ENCODE measurements at regions of chr6 and their contacts with region 1.

Region 1: GRCh38 chr6:99471638-99472037 is 43.6 kb downstream of the USP45 start:
- DNase-seq: no peak
- H3K4me3 ChIP-seq: no peak overlapping the region
- H3K27ac ChIP-seq: no peak overlapping the region
- H3K4me1 ChIP-seq: no peaks in the 10 kb centered on the region
- H3K27me3 ChIP-seq: no peaks in the 10 kb centered on the region

Region 2: DNA sequence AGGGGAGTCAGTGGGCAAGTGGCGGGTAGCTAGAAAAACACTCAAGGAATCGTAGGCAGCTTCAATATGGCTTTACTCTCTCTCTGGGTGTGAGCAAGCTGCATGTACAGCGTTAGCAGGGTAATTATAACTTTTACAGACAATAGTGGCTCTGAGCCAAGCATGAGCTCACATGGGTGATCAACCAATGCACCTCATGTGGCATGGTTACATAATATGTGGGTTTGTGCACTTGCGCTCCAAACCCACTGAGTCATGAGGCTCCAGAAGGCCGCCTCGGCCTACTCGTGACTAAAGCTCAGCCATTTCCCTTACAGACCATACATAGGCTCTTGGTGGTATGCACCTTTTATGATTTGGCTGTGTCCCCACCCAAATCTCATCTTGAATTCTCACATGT is 445.5 kb before region 1 on chr6:
- in situ Hi-C with region 1: no loop called
- DNase-seq: no peak
- H3K4me3 ChIP-seq: no peak overlapping the region
- H3K27ac ChIP-seq: no peak overlapping the region
- H3K4me1 ChIP-seq: no peaks in the 10 kb centered on the region
- H3K27me3 ChIP-seq: peaks cover 8% of the 10 kb centered on the region; the same call in 1 of the 2 replicates

Region 3: DNA sequence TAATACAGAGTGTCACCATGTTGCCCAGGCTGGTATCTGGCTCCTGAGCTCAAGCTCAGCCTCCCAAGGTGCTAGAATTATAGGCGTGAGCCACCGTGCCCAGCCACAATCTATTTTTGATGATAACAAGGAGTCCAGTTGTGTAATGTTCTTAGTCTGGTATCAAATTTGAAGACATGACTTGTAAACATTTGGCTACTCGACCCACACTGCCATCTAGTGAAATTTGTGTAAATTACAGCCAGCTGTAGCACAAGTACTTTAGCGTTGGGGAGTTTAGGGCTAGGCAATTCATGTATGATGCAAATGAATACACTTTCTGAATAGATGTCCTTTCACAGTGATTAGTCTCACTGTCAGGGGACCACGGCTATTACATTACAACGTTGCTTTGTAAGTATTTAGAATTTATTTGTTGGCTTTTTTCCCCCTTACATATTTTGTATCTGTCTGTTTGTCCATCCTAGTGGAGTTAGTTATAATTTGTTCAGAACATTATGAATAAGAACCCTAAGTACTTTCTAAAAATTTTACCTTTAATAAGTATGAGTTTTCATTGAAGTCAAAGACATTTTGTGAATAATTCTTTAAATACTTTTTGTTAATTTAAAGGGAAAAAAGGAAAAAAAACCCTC is 274.7 kb after region 1 on chr6:
- in situ Hi-C with region 1: loop called (anchors 10 kb)
- DNase-seq: peak; percentile 69
- H3K4me3 ChIP-seq: no peak overlapping the region
- H3K27ac ChIP-seq: no peak overlapping the region
- H3K4me1 ChIP-seq: peaks cover 6% of the 10 kb centered on the region
- H3K27me3 ChIP-seq: peaks cover 11% of the 10 kb centered on the region; the same call in 1 of the 2 replicates